Dendritic cell treated with granulocyte-macrophage colony-stimulating factor and Interleukin-4, amounts not matched to agents 40 ng/mL and 50 ng/mL, for 4 days (primary cell): ENCODE measurements at regions of chr17 and their contacts with region 1.

Region 1: GRCh38 chr17:29931231-29931932 is 1.4 kb upstream of the SSH2 start:
- H3K4me3 Mint-ChIP-seq: no peak overlapping the region
- H3K27ac Mint-ChIP-seq: no peak overlapping the region
- H3K4me1 Mint-ChIP-seq: peaks cover 21% of the 10 kb centered on the region
- H3K27me3 Mint-ChIP-seq: no peaks in the 10 kb centered on the region

Region 2: GRCh38 chr17:29640413-29640812 is 291.0 kb before region 1 on chr17:
- intact Hi-C with region 1: loop called (anchors 2 kb)
- H3K4me3 Mint-ChIP-seq: no peak overlapping the region
- H3K27ac Mint-ChIP-seq: no peak overlapping the region
- H3K4me1 Mint-ChIP-seq: peaks cover 36% of the 10 kb centered on the region
- H3K27me3 Mint-ChIP-seq: no peaks in the 10 kb centered on the region

Region 3: GRCh38 chr17:29807520-29808351 is 123.6 kb before region 1 on chr17:
- intact Hi-C with region 1: loop called (anchors 1 kb)
- H3K4me3 Mint-ChIP-seq: peak overlapping the region; percentile 73
- H3K27ac Mint-ChIP-seq: peak overlapping the region; percentile 85
- H3K4me1 Mint-ChIP-seq: peaks cover 13% of the 10 kb centered on the region
- H3K27me3 Mint-ChIP-seq: no peaks in the 10 kb centered on the region

Region 4: GRCh38 chr17:29867643-29868181 is 63.7 kb before region 1 on chr17:
- intact Hi-C with region 1: loop called (anchors 5 kb)
- H3K4me3 Mint-ChIP-seq: peak overlapping the region; percentile 42
- H3K27ac Mint-ChIP-seq: peak overlapping the region; percentile 72
- H3K4me1 Mint-ChIP-seq: peaks cover 41% of the 10 kb centered on the region
- H3K27me3 Mint-ChIP-seq: no peaks in the 10 kb centered on the region

Region 5: GRCh38 chr17:30021708-30022317 is 90.4 kb after region 1 on chr17:
- intact Hi-C with region 1: loop called (anchors 10 kb)
- H3K4me3 Mint-ChIP-seq: no peak overlapping the region
- H3K27ac Mint-ChIP-seq: no peak overlapping the region
- H3K4me1 Mint-ChIP-seq: no peaks in the 10 kb centered on the region
- H3K27me3 Mint-ChIP-seq: peaks cover 2% of the 10 kb centered on the region

Region 6: DNA sequence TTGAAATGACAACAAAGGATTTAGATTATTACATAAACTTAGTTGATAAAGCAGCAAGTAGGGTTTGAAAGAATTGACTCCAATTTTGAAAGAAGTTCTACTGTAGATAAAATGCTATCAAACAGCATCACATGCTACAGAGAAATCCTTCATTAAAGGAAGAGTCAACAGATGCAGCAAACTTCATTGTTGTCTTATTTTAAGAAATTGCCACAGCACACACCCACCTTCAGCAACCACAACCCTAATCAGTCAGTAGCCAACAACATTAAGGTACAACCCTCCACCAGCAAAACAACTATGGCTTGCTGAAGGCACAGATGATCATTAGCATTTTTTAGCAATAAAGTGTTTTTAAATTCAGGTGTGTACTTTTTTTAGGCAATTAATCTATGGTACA is 110.2 kb after region 1 on chr17:
- intact Hi-C with region 1: no loop called
- H3K4me3 Mint-ChIP-seq: no peak overlapping the region
- H3K27ac Mint-ChIP-seq: no peak overlapping the region
- H3K4me1 Mint-ChIP-seq: peaks cover 22% of the 10 kb centered on the region
- H3K27me3 Mint-ChIP-seq: no peaks in the 10 kb centered on the region